Mucosa of descending colon (tissue), 3 donors: ENCODE measurements at regions of chr13 and their contacts with region 1.

Region 1: DNA sequence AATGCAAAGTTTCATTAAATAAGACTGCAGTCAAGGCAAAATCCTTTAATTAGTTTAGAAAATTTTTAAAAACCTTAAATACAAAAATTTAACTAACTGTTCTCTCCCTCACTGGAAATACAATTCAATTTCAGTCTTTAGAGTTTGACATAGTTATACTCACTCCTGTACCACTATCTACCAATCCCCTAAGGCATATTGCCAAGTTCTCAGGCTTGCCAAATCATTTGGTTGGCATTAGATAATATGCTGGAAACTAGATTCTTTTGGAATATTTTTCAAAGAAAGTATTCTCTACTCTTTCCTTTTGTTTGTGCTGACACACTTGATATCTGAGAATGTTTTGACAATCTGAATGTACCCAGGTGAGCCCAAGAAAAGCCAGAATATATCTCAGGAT is 77.2 kb downstream of the TSC22D1 start:
- DNase-seq: no peak
- ATAC-seq: no peak
- H3K4me3 ChIP-seq: no peak overlapping the region
- H3K4me1 ChIP-seq: no peaks in the 10 kb centered on the region
- CTCF ChIP-seq: no peak

Region 2: GRCh38 chr13:44565881-44566280 is 66.9 kb after region 1 on chr13:
- intact Hi-C with region 1: loop called in 1 of 2 experiments (anchors 10 kb)
- DNase-seq: no peak
- ATAC-seq: no peak
- H3K4me3 ChIP-seq: no peak overlapping the region
- H3K4me1 ChIP-seq: peaks cover 5% of the 10 kb centered on the region
- CTCF ChIP-seq: no peak